ENCODE measurements at regions of chr10 and their contacts with region 1.

Region 1: GRCh38 chr10:97334370-97335175 is at the start of gene FRAT2:
- DNase-seq: peak; percentile 71 to 92 (median 84)
- ATAC-seq: peak; percentile 88 to 91 (median 88)
- H3K4me3 ChIP-seq: peak within 1 kb of the TSS; percentile 70 to 82
- H3K4me3 Mint-ChIP-seq: peak within 1 kb of the TSS; percentile 93 to 95 (median 93)
- H3K27ac ChIP-seq: peak within 1 kb of the TSS; percentile 90
- H3K27ac Mint-ChIP-seq: peak within 1 kb of the TSS; percentile 87 to 93
- H3K4me1 ChIP-seq: peaks cover 11 to 38% of the 10 kb centered on the region in 2 experiments
- H3K4me1 Mint-ChIP-seq: peaks cover 37 to 41% (median 40%) of the 10 kb centered on the region in 3 donors
- H3K27me3 ChIP-seq: peaks cover 0 to 5% of the 10 kb centered on the region in 2 experiments
- H3K27me3 Mint-ChIP-seq: no peaks in the 10 kb centered on the region
- total RNA-seq, gene FRAT2: 23.3 to 29.0 (median 28.3) TPM

Region 2: GRCh38 chr10:97318772-97319651 is 15.6 kb before region 1 on chr10 and contains the start of gene FRAT1:
- CTCF ChIA-PET with region 1: interaction called, 12 to 28 read pairs
- POLR2A ChIA-PET with region 1: interaction called, 10 to 13 read pairs
- DNase-seq: peak; percentile 74 to 96 (median 89)
- ATAC-seq: peak; percentile 72 to 76 (median 74)
- H3K4me3 ChIP-seq: peak within 1 kb of the TSS; percentile 83 to 85
- H3K4me3 Mint-ChIP-seq: peak within 1 kb of the TSS; percentile 97 to 98 (median 98)
- H3K27ac ChIP-seq: peak within 1 kb of the TSS; percentile 99
- H3K27ac Mint-ChIP-seq: peak within 1 kb of the TSS; percentile 100
- H3K4me1 ChIP-seq: peaks cover 16 to 33% of the 10 kb centered on the region in 2 experiments
- H3K4me1 Mint-ChIP-seq: peaks cover 28 to 39% (median 31%) of the 10 kb centered on the region in 3 donors
- H3K27me3 ChIP-seq: peaks cover 0 to 3% of the 10 kb centered on the region in 2 experiments
- H3K27me3 Mint-ChIP-seq: no peaks in the 10 kb centered on the region
- total RNA-seq, gene FRAT1: 20.6 to 47.9 (median 23.4) TPM

Region 3: DNA sequence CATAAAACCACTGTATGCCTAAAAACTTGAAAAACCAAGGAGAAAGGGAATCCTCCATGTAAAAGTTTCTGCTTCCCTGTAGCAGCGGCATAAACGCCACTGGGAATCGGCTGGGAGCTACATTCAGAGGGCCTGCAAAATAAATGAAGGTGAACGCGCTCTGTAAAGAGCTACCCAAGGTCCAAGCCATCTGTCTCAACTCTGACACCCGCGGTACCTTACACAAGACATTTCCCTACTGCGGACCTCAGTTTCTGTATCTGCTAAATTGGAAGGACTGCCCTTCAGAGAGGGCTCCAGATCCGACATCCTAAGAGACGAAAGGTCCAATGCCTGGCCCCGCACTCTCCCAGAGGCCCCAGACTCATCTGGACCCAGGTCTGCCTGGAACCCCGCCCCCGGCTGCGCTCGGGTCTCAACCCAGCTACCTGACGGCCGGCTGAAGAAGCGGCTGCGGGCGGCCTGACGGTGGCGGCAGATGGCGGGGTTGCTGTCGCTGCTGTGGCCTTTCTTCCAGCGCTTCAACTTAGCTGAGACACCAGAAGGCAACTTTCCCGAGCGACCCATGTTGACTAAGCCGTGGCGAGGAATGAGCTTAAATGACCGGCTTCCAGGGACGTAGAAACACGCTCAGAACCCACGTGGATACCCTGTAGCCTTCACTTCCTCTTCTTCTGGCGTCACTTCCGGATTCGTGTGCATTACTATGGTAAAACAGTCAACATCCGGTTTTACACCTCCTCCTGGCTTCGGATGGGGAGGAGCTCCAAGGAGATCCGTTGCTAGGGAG is 66.3 kb after region 1 on chr10 and contains the start of gene RRP12:
- CTCF ChIA-PET with region 1: no interaction called
- POLR2A ChIA-PET with region 1: interaction called in 1 of 2 experiments, 11 read pairs
- DNase-seq: peak; percentile 47 to 97 (median 85)
- ATAC-seq: peak; percentile 96 to 99 (median 99)
- H3K4me3 ChIP-seq: peak within 1 kb of the TSS; percentile 69 to 95
- H3K4me3 Mint-ChIP-seq: peak within 1 kb of the TSS; percentile 93 to 98 (median 95)
- H3K27ac ChIP-seq: peak within 1 kb of the TSS; percentile 85
- H3K27ac Mint-ChIP-seq: peak within 1 kb of the TSS; percentile 93
- H3K4me1 ChIP-seq: peaks cover 5 to 16% of the 10 kb centered on the region in 2 experiments
- H3K4me1 Mint-ChIP-seq: peaks cover 15 to 20% (median 16%) of the 10 kb centered on the region in 3 donors
- H3K27me3 ChIP-seq: no peaks in the 10 kb centered on the region
- H3K27me3 Mint-ChIP-seq: no peaks in the 10 kb centered on the region
- total RNA-seq, gene RRP12: 25.9 to 91.4 (median 33.5) TPM

Measured in T-cell (primary cell).